IMR-90 (cell line): ENCODE measurements at regions of chr19 and their contacts with region 1.

Region 1: GRCh38 chr19:42132851-42133528 is 744 bp upstream of the POU2F2 start:
- DNase-seq: no peak
- ATAC-seq: peak; percentile 95
- H3K4me3 ChIP-seq: peak overlapping the region; percentile 21; the same call in 1 of the 2 replicates
- H3K27ac ChIP-seq: no peak overlapping the region
- H3K4me1 ChIP-seq: peaks cover 14% of the 10 kb centered on the region
- H3K27me3 ChIP-seq: peaks cover 14% of the 10 kb centered on the region
- CTCF ChIP-seq: peak; percentile 95
- POLR2A ChIP-seq: 0 out of 2 replicates have a peak, but pooled peaks have one; percentile 25
- RAD21 ChIP-seq: peak; percentile 96

Region 2: DNA sequence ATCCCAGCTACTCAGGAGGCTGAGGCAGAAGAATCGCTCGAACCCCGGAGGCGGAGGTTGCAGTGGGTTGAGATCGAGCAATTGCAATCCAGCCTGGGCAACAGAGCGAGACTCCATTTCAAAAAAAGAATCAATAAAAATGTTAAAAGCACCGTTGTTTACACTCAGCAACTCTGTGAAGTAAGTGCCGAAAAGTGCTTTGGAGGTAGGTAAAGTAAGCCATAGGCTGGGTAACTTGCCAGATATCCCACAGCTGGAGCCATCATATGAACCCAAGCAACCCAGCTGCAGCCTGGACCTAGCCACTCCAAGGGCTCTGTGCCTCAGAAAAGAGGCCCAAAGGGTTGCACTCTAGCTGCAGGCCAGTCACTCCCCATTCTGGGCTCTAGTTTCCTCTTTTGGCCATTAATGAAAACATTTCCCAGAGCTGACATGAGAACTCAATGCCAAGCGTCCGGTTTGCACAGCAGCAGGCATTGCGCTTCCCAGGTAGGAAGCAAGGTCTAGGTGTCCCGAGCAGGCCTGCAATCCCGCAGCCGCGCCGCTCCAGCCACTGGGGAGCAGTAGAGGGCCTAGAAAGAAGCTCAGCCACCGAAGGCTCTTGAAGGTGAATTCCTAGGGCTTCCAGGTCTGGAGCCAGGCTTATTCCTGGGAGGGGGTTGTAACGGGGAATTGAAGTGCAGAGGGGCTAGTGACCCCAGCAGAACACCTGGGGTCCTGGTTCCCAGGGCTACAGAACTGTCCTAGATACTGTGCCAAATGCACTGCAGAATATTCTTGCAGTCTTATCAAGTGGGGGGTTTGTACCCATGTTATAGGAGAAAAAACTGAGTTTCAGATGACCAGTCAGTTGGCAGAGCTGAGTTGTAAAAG is 260.0 kb before region 1 on chr19:
- CTCF ChIA-PET with region 1: no interaction called
- POLR2A ChIA-PET with region 1: no interaction called
- dilution Hi-C with region 1: no loop called
- in situ Hi-C with region 1: no loop called
- intact Hi-C with region 1: no loop called
- DNase-seq: peak; percentile 59
- ATAC-seq: peak; percentile 62
- H3K4me3 ChIP-seq: no peak overlapping the region
- H3K27ac ChIP-seq: no peak overlapping the region
- H3K4me1 ChIP-seq: peaks cover 1% of the 10 kb centered on the region; the same call in 1 of the 2 replicates
- H3K27me3 ChIP-seq: peaks cover 9% of the 10 kb centered on the region; the same call in 1 of the 2 replicates
- CTCF ChIP-seq: peak; percentile 55
- POLR2A ChIP-seq: peak; percentile 48; the same call in 1 of the 2 replicates
- RAD21 ChIP-seq: peak; percentile 60

Region 3: GRCh38 chr19:42108527-42109389 is 24.2 kb before region 1 on chr19:
- CTCF ChIA-PET with region 1: interaction called, 6 read pairs
- POLR2A ChIA-PET with region 1: no interaction called
- dilution Hi-C with region 1: no loop called
- in situ Hi-C with region 1: no loop called
- intact Hi-C with region 1: loop called (anchors 2 kb)
- DNase-seq: peak; percentile 89
- ATAC-seq: peak; percentile 82
- H3K4me3 ChIP-seq: no peak overlapping the region
- H3K27ac ChIP-seq: no peak overlapping the region
- H3K4me1 ChIP-seq: peaks cover 19% of the 10 kb centered on the region
- H3K27me3 ChIP-seq: peaks cover 3% of the 10 kb centered on the region; the same call in 1 of the 2 replicates
- CTCF ChIP-seq: peak; percentile 100; the same call in 1 of the 2 replicates
- POLR2A ChIP-seq: peak; percentile 69
- RAD21 ChIP-seq: peak; percentile 100

Region 4: DNA sequence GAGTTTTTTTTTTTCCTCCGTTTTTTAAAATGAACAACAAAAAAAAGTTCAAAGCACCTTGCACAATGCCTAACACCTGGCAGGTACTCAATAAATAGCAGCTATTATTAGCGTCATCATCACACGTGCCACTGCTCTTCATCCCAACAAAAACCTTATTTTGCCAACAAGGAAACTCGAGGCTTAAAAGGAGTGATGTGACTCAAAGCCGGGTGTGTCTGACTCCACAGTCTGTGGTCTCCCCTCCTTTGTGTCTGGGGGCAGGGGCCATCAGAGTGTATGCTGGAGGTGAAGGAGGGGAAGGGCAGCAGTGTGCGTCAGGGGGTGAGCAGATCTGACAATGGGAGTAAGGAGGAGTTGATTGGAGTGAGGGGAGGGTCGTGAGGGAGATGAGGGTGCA is 33.3 kb after region 1 on chr19:
- CTCF ChIA-PET with region 1: no interaction called
- POLR2A ChIA-PET with region 1: no interaction called
- dilution Hi-C with region 1: no loop called
- in situ Hi-C with region 1: no loop called
- intact Hi-C with region 1: no loop called
- DNase-seq: no peak
- ATAC-seq: no peak
- H3K4me3 ChIP-seq: no peak overlapping the region
- H3K27ac ChIP-seq: no peak overlapping the region
- H3K4me1 ChIP-seq: no peaks in the 10 kb centered on the region
- H3K27me3 ChIP-seq: peaks cover 78% of the 10 kb centered on the region
- CTCF ChIP-seq: no peak
- POLR2A ChIP-seq: no peak
- RAD21 ChIP-seq: no peak

Region 5: DNA sequence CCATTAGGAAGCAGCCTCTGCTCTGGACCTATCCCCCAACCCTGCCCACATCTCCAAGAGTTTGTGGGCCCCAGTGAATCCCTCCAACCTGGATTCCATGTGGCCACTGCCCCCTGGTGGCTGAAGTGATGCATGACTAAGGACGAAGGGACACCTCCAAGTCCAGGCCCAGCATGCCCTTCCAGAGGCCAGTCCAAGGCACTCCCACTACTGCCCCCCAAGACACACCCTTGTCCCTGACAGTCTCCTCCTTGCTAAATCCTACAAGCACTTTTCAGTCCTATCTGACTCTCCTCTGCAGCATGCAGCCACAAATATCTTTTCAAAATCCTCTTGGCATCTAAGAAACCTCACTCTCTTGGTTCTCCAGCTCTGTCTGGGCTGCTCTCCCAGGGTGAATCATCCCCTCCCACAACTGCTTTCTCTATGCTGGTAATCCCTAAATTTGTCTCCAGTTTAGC is 51.4 kb after region 1 on chr19:
- CTCF ChIA-PET with region 1: interaction called, 4 read pairs
- POLR2A ChIA-PET with region 1: no interaction called
- dilution Hi-C with region 1: no loop called
- in situ Hi-C with region 1: no loop called
- intact Hi-C with region 1: loop called (anchors 1 kb)
- DNase-seq: peak; percentile 81
- ATAC-seq: peak; percentile 98
- H3K4me3 ChIP-seq: no peak overlapping the region
- H3K27ac ChIP-seq: no peak overlapping the region
- H3K4me1 ChIP-seq: peaks cover 4% of the 10 kb centered on the region
- H3K27me3 ChIP-seq: peaks cover 24% of the 10 kb centered on the region
- CTCF ChIP-seq: peak; percentile 85
- POLR2A ChIP-seq: no peak
- RAD21 ChIP-seq: peak; percentile 77

Region 6: DNA sequence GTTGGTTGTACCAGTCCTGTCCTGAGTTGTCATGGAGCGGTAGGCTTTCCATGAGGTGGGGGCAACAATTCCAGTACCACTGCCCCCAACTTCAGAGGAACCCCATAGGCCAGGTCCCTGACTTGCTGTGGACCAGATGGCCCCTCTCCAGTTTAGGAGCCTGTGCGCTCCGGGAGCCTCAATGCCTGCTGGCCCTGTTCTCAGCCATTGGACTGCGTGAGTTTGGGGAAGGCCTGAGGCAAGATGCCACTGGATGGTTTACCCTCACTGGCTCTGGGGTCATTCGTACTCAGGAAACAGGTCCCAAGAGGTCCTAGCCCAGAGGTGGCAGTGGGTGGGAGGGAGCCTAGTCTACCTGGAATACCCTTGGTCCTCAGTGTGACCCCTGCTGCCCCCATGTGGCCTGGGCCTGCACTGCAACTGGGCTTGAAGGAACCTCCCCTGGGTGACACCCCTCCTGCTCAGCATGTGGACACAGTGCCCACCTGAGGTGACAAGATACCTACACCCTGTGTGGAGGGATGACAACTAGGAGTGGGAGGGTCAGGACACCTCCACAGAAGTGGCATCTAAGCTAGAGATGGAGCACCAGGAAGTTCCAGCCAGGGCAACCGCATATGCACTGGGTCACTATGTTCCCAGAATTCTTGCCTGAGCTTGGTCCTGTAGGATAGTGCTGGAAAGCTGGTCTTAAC is 163.0 kb after region 1 on chr19:
- CTCF ChIA-PET with region 1: interaction called, 5 read pairs
- POLR2A ChIA-PET with region 1: no interaction called
- dilution Hi-C with region 1: no loop called
- in situ Hi-C with region 1: no loop called
- intact Hi-C with region 1: loop called (anchors 5 kb)
- DNase-seq: peak; percentile 41
- ATAC-seq: peak; percentile 96
- H3K4me3 ChIP-seq: no peak overlapping the region
- H3K27ac ChIP-seq: no peak overlapping the region
- H3K4me1 ChIP-seq: no peaks in the 10 kb centered on the region
- H3K27me3 ChIP-seq: no peaks in the 10 kb centered on the region
- CTCF ChIP-seq: peak; percentile 80
- POLR2A ChIP-seq: no peak
- RAD21 ChIP-seq: peak; percentile 75

Region 7: GRCh38 chr19:42401365-42402303 is 268.6 kb after region 1 on chr19:
- CTCF ChIA-PET with region 1: no interaction called
- POLR2A ChIA-PET with region 1: no interaction called
- dilution Hi-C with region 1: no loop called
- in situ Hi-C with region 1: no loop called
- intact Hi-C with region 1: loop called (anchors 10 kb)
- DNase-seq: peak; percentile 73
- ATAC-seq: peak; percentile 51
- H3K4me3 ChIP-seq: peak overlapping the region; percentile 65
- H3K27ac ChIP-seq: peak overlapping the region; percentile 19; the same call in 1 of the 2 replicates
- H3K4me1 ChIP-seq: peaks cover 9% of the 10 kb centered on the region; the same call in 1 of the 2 replicates
- H3K27me3 ChIP-seq: no peaks in the 10 kb centered on the region
- CTCF ChIP-seq: peak; percentile 79
- POLR2A ChIP-seq: no peak
- RAD21 ChIP-seq: peak; percentile 53